HCT116 (cell line): ENCODE measurements at regions of chrX and their contacts with region 1.

Region 1: GRCh38 chrX:15143050-15143824 is 126.6 kb downstream of the ASB9 start:
- DNase-seq: peak; percentile 34
- ATAC-seq: peak; percentile 91
- H3K4me3 ChIP-seq: no peak overlapping the region
- H3K27ac ChIP-seq: no peak overlapping the region
- H3K4me1 ChIP-seq: no peaks in the 10 kb centered on the region
- H3K27me3 ChIP-seq: no peaks in the 10 kb centered on the region
- CTCF ChIP-seq: peak; percentile 52 to 65 (median 63); a peak in 5 of 6 replicates
- POLR2A ChIP-seq: no peak
- RAD21 ChIP-seq: peak; percentile 69

Region 2: DNA sequence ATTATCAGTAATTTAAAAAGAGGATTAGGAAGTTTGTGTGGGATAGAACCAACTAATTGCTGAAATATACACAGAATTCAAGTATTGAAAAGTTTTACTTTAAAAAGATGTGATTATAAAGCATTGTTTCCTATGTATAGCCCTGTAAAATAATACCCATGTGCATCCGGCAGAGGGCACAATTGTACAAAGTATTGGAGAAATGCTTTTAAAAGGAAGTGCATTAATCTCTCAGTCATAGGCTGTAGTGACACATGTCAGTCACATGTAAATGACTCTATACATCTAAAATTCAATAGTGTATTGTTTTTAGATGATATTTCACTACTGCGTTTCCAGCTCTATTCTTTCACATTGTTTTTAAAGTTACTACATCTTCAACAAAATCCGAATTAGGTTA is 1103.9 kb before region 1 on chrX:
- CTCF ChIA-PET with region 1: no interaction called
- POLR2A ChIA-PET with region 1: no interaction called
- RAD21 ChIA-PET with region 1: no interaction called
- intact Hi-C with region 1: loop called (anchors 2 kb)
- DNase-seq: no peak
- ATAC-seq: peak; percentile 78
- H3K4me3 ChIP-seq: no peak overlapping the region
- H3K27ac ChIP-seq: no peak overlapping the region
- H3K4me1 ChIP-seq: no peaks in the 10 kb centered on the region
- H3K27me3 ChIP-seq: no peaks in the 10 kb centered on the region
- CTCF ChIP-seq: peak; percentile 27 to 61 (median 43); a peak in 4 of 6 replicates
- POLR2A ChIP-seq: no peak
- RAD21 ChIP-seq: peak; percentile 81